Posterior vena cava (tissue), 2 donors: ENCODE measurements at regions of chr1 and their contacts with region 1.

Region 1: GRCh38 chr1:33763406-33763805 is 100.5 kb upstream of the HMGB4 start:
- DNase-seq: no peak

Region 2: DNA sequence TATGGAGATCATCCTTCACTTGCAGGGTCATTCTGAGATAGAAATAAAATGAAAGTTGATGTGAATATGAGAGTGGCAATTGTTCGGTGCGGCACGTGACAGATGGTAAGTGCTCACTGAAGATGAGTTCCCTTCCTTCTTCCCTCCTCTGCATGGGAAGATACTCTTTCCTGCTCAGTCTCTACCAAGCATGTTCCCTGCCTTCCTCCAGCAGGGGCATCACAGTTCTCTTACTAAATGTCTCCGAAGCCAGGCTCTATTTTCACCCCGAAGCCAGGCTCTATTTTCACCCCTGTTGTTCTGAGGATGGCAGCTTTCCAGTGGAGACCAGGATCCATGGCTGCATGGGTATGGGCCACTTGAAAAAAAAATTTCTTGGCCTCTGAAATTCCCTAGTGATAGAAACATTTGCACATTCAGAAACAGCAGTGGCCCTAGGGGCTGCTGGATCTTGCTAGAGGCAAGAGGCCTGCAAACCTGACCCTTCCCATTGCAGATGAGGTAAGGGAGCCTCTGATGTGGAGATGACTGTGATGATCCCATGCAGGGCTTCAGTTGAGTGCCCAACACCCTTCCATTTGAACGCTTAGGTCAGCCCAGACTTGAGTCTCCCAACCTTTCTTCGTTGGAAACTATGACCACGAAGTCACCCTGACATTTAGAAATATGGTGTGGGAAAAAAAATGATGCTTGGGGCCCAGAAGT is 23.2 kb before region 1 on chr1:
- intact Hi-C with region 1: no loop called
- DNase-seq: no peak

Region 3: GRCh38 chr1:33777337-33777736 is 13.9 kb after region 1 on chr1:
- intact Hi-C with region 1: no loop called
- DNase-seq: no peak

Region 4: GRCh38 chr1:33893147-33893830 is 129.9 kb after region 1 on chr1:
- intact Hi-C with region 1: loop called in 1 of 2 experiments (anchors 10 kb)
- DNase-seq: no peak